ENCODE measurements at regions of chr7 and their contacts with region 1.

Region 1: DNA sequence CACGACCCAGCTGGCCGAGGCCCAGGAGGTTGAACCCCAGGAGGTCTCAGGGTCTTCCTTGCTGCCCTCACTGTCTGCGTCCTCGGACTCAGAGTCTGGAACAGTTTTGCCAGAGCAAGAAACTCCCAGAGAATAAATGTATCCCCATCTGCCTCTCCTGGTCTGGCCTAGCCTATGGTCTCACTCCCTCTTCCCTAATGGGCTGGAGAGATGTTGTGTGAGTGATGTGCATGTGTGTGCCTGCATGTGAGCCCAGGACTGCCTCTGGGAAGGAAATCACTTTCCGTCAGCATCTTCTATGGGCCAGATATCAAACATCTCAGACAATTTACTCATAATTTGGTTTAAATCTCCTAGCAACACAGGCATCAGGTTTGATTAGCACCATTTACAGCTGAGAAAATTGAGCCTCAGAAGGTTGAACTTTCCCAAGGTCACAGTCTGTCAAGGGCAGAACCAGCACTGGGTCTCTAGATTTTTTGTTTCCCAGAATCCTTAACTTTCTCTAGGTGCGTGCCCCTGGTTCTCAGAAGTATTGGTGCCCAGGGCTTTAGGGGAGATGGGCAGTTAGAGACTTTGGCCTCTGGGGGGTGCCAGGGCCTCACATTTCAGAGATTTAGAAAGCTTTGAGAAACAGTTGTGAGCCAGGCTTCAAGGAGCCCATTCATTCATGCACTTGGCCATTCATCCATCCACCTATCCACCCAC is 4.9 kb downstream of the TMEM270 start:
- DNase-seq: no peak
- ATAC-seq: peak; percentile 73
- H3K4me3 ChIP-seq: no peak overlapping the region
- H3K27ac ChIP-seq: no peak overlapping the region
- H3K4me1 ChIP-seq: peaks cover 8% of the 10 kb centered on the region; the same call in 1 of the 2 replicates
- H3K27me3 ChIP-seq: no peaks in the 10 kb centered on the region
- CTCF ChIP-seq: no peak; the same call in 1 of the 2 replicates

Region 2: GRCh38 chr7:73328696-73329095 is 537.2 kb before region 1 on chr7:
- CTCF ChIA-PET with region 1: no interaction called
- POLR2A ChIA-PET with region 1: no interaction called
- in situ Hi-C with region 1: no loop called
- intact Hi-C with region 1: no loop called
- DNase-seq: no peak
- ATAC-seq: no peak
- H3K4me3 ChIP-seq: no peak overlapping the region
- H3K27ac ChIP-seq: no peak overlapping the region
- H3K4me1 ChIP-seq: 0 out of 2 replicates have a peak, but pooled peaks cover 3% of the 10 kb centered on the region
- H3K27me3 ChIP-seq: no peaks in the 10 kb centered on the region
- CTCF ChIP-seq: no peak

Region 3: GRCh38 chr7:73707142-73707595 is 158.7 kb before region 1 on chr7:
- CTCF ChIA-PET with region 1: no interaction called
- POLR2A ChIA-PET with region 1: no interaction called
- in situ Hi-C with region 1: no loop called
- intact Hi-C with region 1: no loop called
- DNase-seq: no peak
- ATAC-seq: peak; percentile 30
- H3K4me3 ChIP-seq: peak overlapping the region in 1 of 2 experiments; percentile 4; a peak in 1 of 4 replicates
- H3K27ac ChIP-seq: peak overlapping the region; percentile 93
- H3K4me1 ChIP-seq: peaks cover 87% of the 10 kb centered on the region
- H3K27me3 ChIP-seq: no peaks in the 10 kb centered on the region
- CTCF ChIP-seq: no peak

Region 4: GRCh38 chr7:73718905-73719805 is 146.7 kb before region 1 on chr7 and contains the start of gene STX1A:
- CTCF ChIA-PET with region 1: interaction called, 12 read pairs
- POLR2A ChIA-PET with region 1: no interaction called
- in situ Hi-C with region 1: no loop called
- intact Hi-C with region 1: no loop called
- DNase-seq: no peak
- ATAC-seq: peak; percentile 63
- H3K4me3 ChIP-seq: peak within 1 kb of the TSS; percentile 82 to 96
- H3K27ac ChIP-seq: peak within 1 kb of the TSS; percentile 96
- H3K4me1 ChIP-seq: peaks cover 62% of the 10 kb centered on the region
- H3K27me3 ChIP-seq: no peaks in the 10 kb centered on the region
- CTCF ChIP-seq: no peak
- total RNA-seq, gene STX1A: 80.9 TPM

Region 5: DNA sequence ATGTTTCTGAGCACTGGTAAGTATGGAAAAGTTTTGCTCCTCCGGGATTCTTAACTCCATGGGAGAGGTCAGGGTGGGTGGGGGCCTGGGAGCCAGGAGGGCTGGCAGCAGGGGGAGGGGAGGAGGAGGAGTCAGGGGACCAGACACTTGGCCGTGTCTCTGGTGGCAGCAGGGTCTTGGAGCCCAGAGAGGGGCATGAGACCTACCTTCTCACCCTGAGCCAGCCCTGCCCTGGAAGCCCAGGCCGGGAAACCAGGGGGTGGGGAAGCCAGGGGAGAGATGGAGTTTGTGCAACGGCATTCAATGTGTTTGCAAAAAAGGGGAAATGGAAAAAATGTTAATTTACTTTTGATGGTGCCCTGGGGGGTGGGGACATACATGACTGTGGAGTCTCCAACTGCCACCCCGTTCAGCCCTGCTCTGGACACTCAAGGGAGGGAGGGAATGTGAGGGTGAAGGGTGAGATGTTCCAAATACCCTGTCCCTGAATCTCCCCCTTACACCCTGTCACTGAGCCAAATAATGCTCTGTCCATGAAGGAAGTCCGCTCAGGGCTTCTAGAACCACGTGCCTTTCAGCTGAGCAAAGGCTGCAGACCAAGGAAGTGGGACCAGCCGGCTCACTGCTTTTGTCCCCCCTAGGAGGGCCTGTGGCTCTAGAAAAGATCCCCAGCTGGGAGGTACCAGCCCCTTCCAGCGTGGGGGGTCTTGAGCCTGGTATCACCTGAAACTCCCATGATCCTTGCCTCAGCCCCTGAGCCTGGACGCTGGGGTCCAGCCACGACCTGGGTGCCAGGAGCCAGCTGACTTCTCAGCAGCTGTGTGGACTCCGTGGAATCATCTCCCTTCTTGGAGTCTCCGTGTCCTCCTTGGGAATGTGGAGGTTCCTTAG is 43.4 kb after region 1 on chr7:
- CTCF ChIA-PET with region 1: no interaction called
- POLR2A ChIA-PET with region 1: no interaction called
- in situ Hi-C with region 1: no loop called
- intact Hi-C with region 1: no loop called
- DNase-seq: no peak
- ATAC-seq: no peak
- H3K4me3 ChIP-seq: no peak overlapping the region
- H3K27ac ChIP-seq: no peak overlapping the region
- H3K4me1 ChIP-seq: no peaks in the 10 kb centered on the region
- H3K27me3 ChIP-seq: no peaks in the 10 kb centered on the region
- CTCF ChIP-seq: no peak

Region 6: DNA sequence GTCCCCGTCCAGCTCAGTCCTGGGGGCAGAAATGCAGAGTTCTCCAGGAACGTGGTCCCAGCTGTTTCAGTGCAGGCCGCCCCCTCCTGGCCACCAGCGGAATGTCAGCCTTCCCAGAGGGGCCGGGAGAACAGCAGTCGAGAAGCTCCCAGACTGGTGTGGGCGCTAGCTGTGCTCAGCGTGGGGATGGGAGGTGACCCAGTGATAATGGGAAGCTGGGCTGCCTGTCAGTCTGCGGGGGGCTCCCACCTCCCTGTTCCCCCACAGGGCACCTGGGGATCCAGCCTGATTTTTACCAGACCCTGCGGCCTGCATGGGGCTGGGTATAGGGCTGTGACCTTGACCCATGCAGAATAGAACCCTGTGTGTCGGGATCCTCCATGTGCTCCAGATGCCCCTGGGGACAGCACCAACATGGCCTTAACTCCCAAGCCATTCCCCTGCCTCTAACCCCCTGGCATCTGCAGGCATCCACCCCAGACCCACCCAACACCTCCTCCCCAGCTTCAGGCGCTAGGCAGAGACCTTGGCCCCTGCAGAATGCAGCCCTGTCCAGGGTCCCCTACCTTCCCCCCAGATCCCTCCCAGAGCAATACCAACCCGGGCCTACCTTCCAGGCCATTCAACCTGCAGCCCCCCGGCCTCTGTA is 161.1 kb after region 1 on chr7:
- CTCF ChIA-PET with region 1: interaction called, 10 read pairs
- POLR2A ChIA-PET with region 1: no interaction called
- in situ Hi-C with region 1: no loop called
- intact Hi-C with region 1: loop called (anchors 1 kb)
- DNase-seq: peak; percentile 45
- ATAC-seq: peak; percentile 83
- H3K4me3 ChIP-seq: no peak overlapping the region
- H3K27ac ChIP-seq: no peak overlapping the region
- H3K4me1 ChIP-seq: peaks cover 23% of the 10 kb centered on the region
- H3K27me3 ChIP-seq: no peaks in the 10 kb centered on the region
- CTCF ChIP-seq: peak; percentile 98

Region 7: GRCh38 chr7:74187915-74188630 is 322.2 kb after region 1 on chr7:
- CTCF ChIA-PET with region 1: no interaction called
- POLR2A ChIA-PET with region 1: no interaction called
- in situ Hi-C with region 1: no loop called
- intact Hi-C with region 1: loop called (anchors 5 kb)
- DNase-seq: no peak
- ATAC-seq: peak; percentile 39; the same call in 1 of the 2 replicates
- H3K4me3 ChIP-seq: no peak overlapping the region
- H3K27ac ChIP-seq: no peak overlapping the region
- H3K4me1 ChIP-seq: peaks cover 17% of the 10 kb centered on the region
- H3K27me3 ChIP-seq: no peaks in the 10 kb centered on the region
- CTCF ChIP-seq: no peak

Measured in Panc1 (cell line).